Posterior vena cava (tissue), 2 donors: ENCODE measurements at regions of chr1 and their contacts with region 1.

Region 1: GRCh38 chr1:67760030-67760821 is 73.0 kb downstream of the GNG12 start:
- DNase-seq: no peak

Region 2: GRCh38 chr1:66231217-66231616 is 1529.0 kb before region 1 on chr1:
- intact Hi-C with region 1: no loop called
- DNase-seq: no peak

Region 3: DNA sequence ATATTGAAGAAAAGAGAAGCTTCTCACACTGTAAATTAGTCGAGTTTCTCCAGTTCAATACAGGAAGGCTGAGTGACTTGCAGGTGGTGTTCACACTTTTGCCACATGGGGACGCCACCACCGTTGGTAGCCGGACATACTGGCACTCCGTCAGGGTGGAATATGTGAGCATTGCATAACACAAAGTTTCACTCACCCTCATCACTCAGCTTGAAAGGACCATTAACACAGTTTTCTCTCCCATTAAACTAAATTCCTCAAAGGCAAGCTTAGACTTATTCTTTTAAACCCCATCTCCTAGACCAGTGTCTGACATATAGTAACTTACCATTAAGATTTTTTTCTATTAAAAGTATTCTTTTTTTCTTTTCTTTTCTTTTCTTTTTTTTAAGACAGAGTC is 224.8 kb before region 1 on chr1:
- intact Hi-C with region 1: loop called (anchors 5 kb)
- DNase-seq: peak; percentile 93

Region 4: GRCh38 chr1:67561704-67562113 is 198.5 kb before region 1 on chr1:
- intact Hi-C with region 1: loop called in 1 of 2 experiments (anchors 5 kb)
- DNase-seq: peak; percentile 96

Region 5: GRCh38 chr1:67713057-67713846 is 47.0 kb before region 1 on chr1:
- intact Hi-C with region 1: loop called in 1 of 2 experiments (anchors 5 kb)
- DNase-seq: no peak

Region 6: DNA sequence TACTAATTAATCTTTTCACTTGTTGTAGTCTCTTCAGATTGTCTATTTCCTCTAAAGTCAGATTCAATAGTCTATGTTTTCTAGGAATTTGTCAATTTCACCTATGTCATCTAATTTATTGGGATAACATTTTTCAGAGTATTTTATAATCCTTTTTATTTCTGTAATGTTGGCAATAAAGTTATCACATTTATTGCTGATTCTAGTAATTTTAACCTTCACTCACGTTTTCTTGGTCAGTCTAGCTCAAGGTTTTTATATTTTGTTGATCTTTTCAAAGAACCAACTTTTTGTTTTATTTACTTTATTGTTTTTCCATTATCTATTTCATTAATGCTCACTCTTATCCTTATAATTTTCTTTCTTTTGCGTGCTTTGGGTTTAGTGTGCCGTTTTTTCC is 171.0 kb after region 1 on chr1:
- intact Hi-C with region 1: no loop called
- DNase-seq: no peak

Region 7: GRCh38 chr1:68120136-68120791 is 360.0 kb after region 1 on chr1:
- intact Hi-C with region 1: loop called in 1 of 2 experiments (anchors 10 kb)
- DNase-seq: no peak